ENCODE measurements at regions of chr10 and their contacts with region 1.

Region 1: DNA sequence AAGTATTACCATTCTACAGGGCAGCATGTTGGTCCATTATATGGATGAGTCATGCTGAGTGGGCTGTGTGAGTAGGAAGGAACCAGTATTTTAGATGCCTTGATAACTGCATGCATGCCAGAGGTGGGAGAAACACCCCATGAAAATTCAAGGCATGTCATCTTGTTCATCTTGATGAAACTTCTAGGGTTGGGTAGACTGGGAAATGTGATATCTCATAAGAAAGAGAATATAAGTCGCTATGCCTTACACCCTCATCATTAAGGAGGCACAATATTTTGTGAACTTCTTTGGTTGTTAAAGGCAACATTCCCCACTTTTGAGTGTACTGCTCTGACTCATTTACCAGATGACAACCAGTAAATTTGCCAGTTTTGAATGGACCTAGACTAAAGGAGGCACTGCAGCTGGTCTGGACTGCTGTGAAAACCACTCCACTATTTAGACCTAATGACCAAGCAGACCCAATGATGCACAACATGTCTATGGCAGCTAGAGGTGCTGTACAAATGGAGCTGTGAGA is 48.0 kb downstream of the ZNF365 start:
- DNase-seq: no peak
- H3K4me3 ChIP-seq: no peak overlapping the region
- H3K27ac ChIP-seq: no peak overlapping the region
- H3K4me1 ChIP-seq: no peaks in the 10 kb centered on the region
- H3K27me3 ChIP-seq: no peaks in the 10 kb centered on the region
- CTCF ChIP-seq: no peak
- POLR2A ChIP-seq: no peak

Region 2: DNA sequence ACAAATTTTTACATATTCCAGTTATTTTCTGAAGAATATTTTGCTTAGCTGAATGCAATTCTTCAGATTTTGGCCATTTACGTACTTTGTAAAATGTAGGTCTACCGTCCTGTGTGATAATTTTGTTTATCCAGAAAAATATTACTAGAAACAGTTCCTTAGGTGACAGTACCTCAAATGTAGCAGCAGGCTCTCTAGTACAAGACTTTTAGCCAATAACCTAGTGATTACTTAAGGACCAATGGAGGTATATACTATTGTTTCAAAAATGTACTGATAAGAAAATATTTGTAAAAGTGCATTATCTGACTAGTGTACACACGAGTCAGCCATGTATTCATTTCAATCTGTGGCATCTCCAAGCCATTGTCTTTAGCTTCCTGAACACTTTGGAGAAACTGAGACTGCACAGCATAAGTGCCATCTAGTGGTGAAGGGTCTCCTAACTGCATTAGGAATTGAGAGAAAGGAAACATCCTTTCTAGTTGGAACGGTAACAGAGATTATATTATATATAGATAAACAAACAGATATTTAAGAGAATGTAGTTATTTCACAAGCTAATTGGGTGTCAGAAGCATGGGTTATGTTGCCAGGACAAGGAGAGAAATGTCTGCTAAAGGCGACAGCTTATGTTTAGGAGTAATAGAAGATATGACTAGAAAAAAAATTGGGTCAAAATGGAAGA is 177.2 kb before region 1 on chr10:
- CTCF ChIA-PET with region 1: interaction called, 13 read pairs
- POLR2A ChIA-PET with region 1: no interaction called
- dilution Hi-C with region 1: no loop called
- intact Hi-C with region 1: no loop called
- DNase-seq: peak; percentile 86
- H3K4me3 ChIP-seq: no peak overlapping the region
- H3K27ac ChIP-seq: no peak overlapping the region
- H3K4me1 ChIP-seq: peaks cover 17% of the 10 kb centered on the region
- H3K27me3 ChIP-seq: no peaks in the 10 kb centered on the region
- CTCF ChIP-seq: peak; percentile 63 to 71
- POLR2A ChIP-seq: no peak

Region 3: GRCh38 chr10:62306663-62307062 is 115.5 kb before region 1 on chr10:
- CTCF ChIA-PET with region 1: no interaction called
- POLR2A ChIA-PET with region 1: no interaction called
- dilution Hi-C with region 1: no loop called
- intact Hi-C with region 1: no loop called
- DNase-seq: no peak
- H3K4me3 ChIP-seq: no peak overlapping the region
- H3K27ac ChIP-seq: no peak overlapping the region
- H3K4me1 ChIP-seq: no peaks in the 10 kb centered on the region
- H3K27me3 ChIP-seq: peaks cover 0 to 3% of the 10 kb centered on the region in 2 experiments
- CTCF ChIP-seq: no peak
- POLR2A ChIP-seq: no peak

Region 4: GRCh38 chr10:62528441-62528840 is 106.3 kb after region 1 on chr10:
- CTCF ChIA-PET with region 1: no interaction called
- POLR2A ChIA-PET with region 1: no interaction called
- dilution Hi-C with region 1: no loop called
- intact Hi-C with region 1: no loop called
- DNase-seq: no peak
- H3K4me3 ChIP-seq: no peak overlapping the region
- H3K27ac ChIP-seq: no peak overlapping the region
- H3K4me1 ChIP-seq: no peaks in the 10 kb centered on the region
- H3K27me3 ChIP-seq: no peaks in the 10 kb centered on the region
- CTCF ChIP-seq: no peak
- POLR2A ChIP-seq: no peak